Caco-2 (cell line): ENCODE measurements at regions of chr18 and their contacts with region 1.

Region 1: DNA sequence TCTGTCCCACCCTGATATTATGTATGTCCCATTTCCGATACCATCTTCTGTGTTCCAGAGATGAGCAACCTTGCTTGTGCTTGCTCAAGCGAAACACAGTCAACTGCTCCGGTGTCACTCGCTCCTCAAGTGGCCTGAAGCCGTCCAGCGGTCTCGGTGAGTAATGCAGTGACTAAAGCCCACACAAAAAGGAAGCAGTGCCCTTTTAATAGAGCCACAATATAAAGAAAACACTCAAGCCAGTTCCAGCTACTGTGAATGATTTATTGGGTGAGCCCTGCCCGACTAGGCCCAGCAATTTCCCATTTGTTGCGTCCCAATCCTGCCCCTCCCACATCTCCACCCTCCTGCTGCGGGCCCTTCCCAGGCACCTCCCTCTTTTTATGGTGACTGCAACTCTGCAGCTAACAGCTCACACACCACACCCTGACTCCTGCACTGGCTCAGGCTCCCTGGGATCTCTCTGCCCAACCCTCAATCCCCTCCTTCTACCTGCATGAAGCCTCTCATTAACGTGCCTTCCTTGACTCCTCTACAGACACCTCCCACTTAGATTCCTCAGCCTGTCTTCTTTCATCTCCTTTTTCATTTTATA is 44.2 kb upstream of the DSC1 start:
- DNase-seq: peak; percentile 75 to 87
- H3K4me3 ChIP-seq: peak overlapping the region; percentile 7; the same call in 1 of the 2 replicates
- H3K4me3 Mint-ChIP-seq: peak overlapping the region; percentile 69
- H3K27ac Mint-ChIP-seq: peak overlapping the region; percentile 84
- H3K4me1 ChIP-seq: peaks cover 17% of the 10 kb centered on the region
- H3K4me1 Mint-ChIP-seq: peaks cover 50% of the 10 kb centered on the region
- H3K27me3 ChIP-seq: no peaks in the 10 kb centered on the region
- H3K27me3 Mint-ChIP-seq: no peaks in the 10 kb centered on the region
- CTCF ChIP-seq: peak in 1 of 2 experiments; percentile 24

Region 2: DNA sequence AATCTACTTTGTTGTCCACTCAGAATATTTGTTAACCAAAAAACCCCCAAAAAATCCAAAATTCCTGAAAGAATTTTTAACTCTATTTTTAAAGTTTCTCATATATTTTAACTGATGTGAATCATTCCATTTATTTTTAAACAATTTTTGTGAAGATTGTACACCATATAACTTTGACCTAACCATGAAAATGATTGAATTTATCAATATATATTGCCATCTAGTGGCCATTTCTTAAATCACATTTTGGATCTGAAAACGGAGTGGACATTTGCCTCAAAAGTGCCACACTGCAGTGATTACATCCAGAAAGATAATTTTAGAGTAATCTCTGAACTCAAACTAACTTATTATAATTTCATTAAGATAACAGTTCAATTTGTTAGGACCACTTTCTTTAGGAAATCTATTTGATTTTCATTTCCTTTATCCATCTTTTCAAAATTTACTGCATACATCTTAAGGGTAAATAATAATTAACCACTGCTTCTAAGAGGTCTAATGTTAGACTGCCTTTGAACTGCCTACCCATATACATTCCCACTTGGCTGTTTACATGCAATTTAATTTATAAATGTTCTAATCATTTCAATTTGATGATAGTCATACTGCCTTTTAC is 235.4 kb before region 1 on chr18:
- CTCF ChIA-PET with region 1: no interaction called
- POLR2A ChIA-PET with region 1: no interaction called
- intact Hi-C with region 1: no loop called
- DNase-seq: peak in 1 of 2 experiments; percentile 16
- H3K4me3 ChIP-seq: no peak overlapping the region
- H3K4me3 Mint-ChIP-seq: no peak overlapping the region
- H3K27ac Mint-ChIP-seq: no peak overlapping the region
- H3K4me1 ChIP-seq: no peaks in the 10 kb centered on the region
- H3K4me1 Mint-ChIP-seq: no peaks in the 10 kb centered on the region
- H3K27me3 ChIP-seq: no peaks in the 10 kb centered on the region
- H3K27me3 Mint-ChIP-seq: no peaks in the 10 kb centered on the region
- CTCF ChIP-seq: peak; percentile 1 to 41

Region 3: GRCh38 chr18:31101183-31102024 is 105.5 kb before region 1 on chr18:
- CTCF ChIA-PET with region 1: no interaction called
- POLR2A ChIA-PET with region 1: no interaction called
- intact Hi-C with region 1: loop called (anchors 1 kb)
- DNase-seq: peak; percentile 61 to 67
- H3K4me3 ChIP-seq: peak overlapping the region; percentile 69
- H3K4me3 Mint-ChIP-seq: peak overlapping the region; percentile 83
- H3K27ac Mint-ChIP-seq: peak overlapping the region; percentile 86
- H3K4me1 ChIP-seq: no peaks in the 10 kb centered on the region
- H3K4me1 Mint-ChIP-seq: peaks cover 17% of the 10 kb centered on the region
- H3K27me3 ChIP-seq: no peaks in the 10 kb centered on the region
- H3K27me3 Mint-ChIP-seq: no peaks in the 10 kb centered on the region
- CTCF ChIP-seq: peak in 1 of 2 experiments; percentile 25

Region 4: GRCh38 chr18:31225668-31226067 is 18.8 kb after region 1 on chr18:
- CTCF ChIA-PET with region 1: no interaction called
- POLR2A ChIA-PET with region 1: no interaction called
- intact Hi-C with region 1: loop called (anchors 1 kb)
- DNase-seq: peak; percentile 56 to 63
- H3K4me3 ChIP-seq: no peak overlapping the region
- H3K4me3 Mint-ChIP-seq: no peak overlapping the region
- H3K27ac Mint-ChIP-seq: peak overlapping the region; percentile 57
- H3K4me1 ChIP-seq: peaks cover 9% of the 10 kb centered on the region
- H3K4me1 Mint-ChIP-seq: peaks cover 18% of the 10 kb centered on the region
- H3K27me3 ChIP-seq: no peaks in the 10 kb centered on the region
- H3K27me3 Mint-ChIP-seq: no peaks in the 10 kb centered on the region
- CTCF ChIP-seq: no peak

Region 5: DNA sequence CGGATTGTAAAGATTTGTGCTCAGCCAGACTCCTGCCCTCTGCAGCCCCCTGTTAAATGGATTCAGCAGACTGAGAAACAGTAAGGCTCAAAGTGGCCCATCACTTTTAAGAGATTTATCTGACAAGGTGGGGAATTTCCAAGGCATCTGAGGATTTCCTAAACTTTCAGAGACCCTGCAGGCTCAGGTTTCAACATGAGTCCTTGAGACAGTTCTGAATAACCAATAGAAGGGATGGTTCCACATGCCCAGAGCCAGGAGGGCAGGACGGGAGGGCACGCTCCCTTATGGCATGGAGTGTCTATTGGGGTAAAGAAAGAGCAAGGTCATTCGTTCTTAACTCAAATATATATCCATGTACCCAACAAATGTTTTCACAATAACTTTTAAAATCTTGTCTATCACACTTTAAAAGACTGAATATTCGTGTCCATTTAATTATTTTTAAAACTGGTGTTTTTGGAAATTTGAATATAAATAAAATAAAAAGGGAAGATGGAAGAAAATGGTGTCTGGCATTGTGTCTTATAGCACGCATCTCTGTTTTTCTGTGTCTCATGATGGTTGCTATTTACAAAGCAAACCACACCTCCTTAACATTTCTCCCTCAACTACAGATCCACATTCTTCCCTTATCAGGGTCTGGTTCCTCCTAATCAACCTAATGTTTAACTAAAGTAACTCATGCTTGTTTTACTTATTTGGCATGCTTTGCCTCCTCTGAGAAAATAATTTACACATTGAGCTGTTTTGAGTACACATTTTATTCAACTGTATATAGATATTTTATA is 55.1 kb after region 1 on chr18:
- CTCF ChIA-PET with region 1: no interaction called
- POLR2A ChIA-PET with region 1: no interaction called
- intact Hi-C with region 1: loop called (anchors 5 kb)
- DNase-seq: peak in 1 of 2 experiments; percentile 56
- H3K4me3 ChIP-seq: no peak overlapping the region
- H3K4me3 Mint-ChIP-seq: no peak overlapping the region
- H3K27ac Mint-ChIP-seq: peak overlapping the region; percentile 84
- H3K4me1 ChIP-seq: peaks cover 21% of the 10 kb centered on the region
- H3K4me1 Mint-ChIP-seq: peaks cover 5% of the 10 kb centered on the region
- H3K27me3 ChIP-seq: no peaks in the 10 kb centered on the region
- H3K27me3 Mint-ChIP-seq: no peaks in the 10 kb centered on the region
- CTCF ChIP-seq: no peak

Region 6: GRCh38 chr18:31512203-31512764 is 305.4 kb after region 1 on chr18:
- CTCF ChIA-PET with region 1: no interaction called
- POLR2A ChIA-PET with region 1: no interaction called
- intact Hi-C with region 1: loop called (anchors 5 kb)
- DNase-seq: peak; percentile 78 to 85
- H3K4me3 ChIP-seq: no peak overlapping the region
- H3K4me3 Mint-ChIP-seq: peak overlapping the region; percentile 58
- H3K27ac Mint-ChIP-seq: peak overlapping the region; percentile 44
- H3K4me1 ChIP-seq: peaks cover 44% of the 10 kb centered on the region
- H3K4me1 Mint-ChIP-seq: peaks cover 20% of the 10 kb centered on the region
- H3K27me3 ChIP-seq: no peaks in the 10 kb centered on the region
- H3K27me3 Mint-ChIP-seq: no peaks in the 10 kb centered on the region
- CTCF ChIP-seq: no peak